ENCODE measurements at regions of chr4 and their contacts with region 1.

Region 1: GRCh38 chr4:152554742-152555141 is 18.9 kb upstream of the FBXW7 start:
- DNase-seq: no peak
- H3K4me3 Mint-ChIP-seq: no peak overlapping the region
- H3K27ac Mint-ChIP-seq: peak overlapping the region; percentile 89
- H3K4me1 Mint-ChIP-seq: peaks cover 47% of the 10 kb centered on the region
- H3K27me3 Mint-ChIP-seq: no peaks in the 10 kb centered on the region

Region 2: GRCh38 chr4:152535903-152536544 is 18.7 kb before region 1 on chr4 and contains the start of gene FBXW7:
- CTCF ChIA-PET with region 1: interaction called, 10 read pairs
- POLR2A ChIA-PET with region 1: interaction called, 22 read pairs
- DNase-seq: peak; percentile 99
- H3K4me3 Mint-ChIP-seq: peak within 1 kb of the TSS; percentile 83
- H3K27ac Mint-ChIP-seq: peak within 1 kb of the TSS; percentile 99
- H3K4me1 Mint-ChIP-seq: peaks cover 46% of the 10 kb centered on the region
- H3K27me3 Mint-ChIP-seq: no peaks in the 10 kb centered on the region
- total RNA-seq, gene FBXW7: 49.4 to 52.2 TPM

Measured in activated CD4-positive, alpha-beta T cell treated with anti-CD3 and anti-CD28 coated beads, Interleukin-2, amount 10 ng/mL, durations not matched to agents 7 days and 5 days (primary cell).